ENCODE measurements at regions of chr3 and their contacts with region 1.

Region 1: GRCh38 chr3:102235679-102236078 is 199.1 kb upstream of the ZPLD1 start:
- DNase-seq: no peak
- ATAC-seq: no peak
- H3K4me3 ChIP-seq: no peak overlapping the region
- H3K27ac ChIP-seq: no peak overlapping the region
- H3K4me1 ChIP-seq: peaks cover 0 to 6% of the 10 kb centered on the region in 2 experiments; a peak in 1 of 4 replicates
- H3K27me3 ChIP-seq: no peaks in the 10 kb centered on the region
- CTCF ChIP-seq: peak; percentile 36 to 70 (median 51); a peak in 5 of 6 replicates
- POLR2A ChIP-seq: no peak
- RAD21 ChIP-seq: peak; percentile 85

Region 2: DNA sequence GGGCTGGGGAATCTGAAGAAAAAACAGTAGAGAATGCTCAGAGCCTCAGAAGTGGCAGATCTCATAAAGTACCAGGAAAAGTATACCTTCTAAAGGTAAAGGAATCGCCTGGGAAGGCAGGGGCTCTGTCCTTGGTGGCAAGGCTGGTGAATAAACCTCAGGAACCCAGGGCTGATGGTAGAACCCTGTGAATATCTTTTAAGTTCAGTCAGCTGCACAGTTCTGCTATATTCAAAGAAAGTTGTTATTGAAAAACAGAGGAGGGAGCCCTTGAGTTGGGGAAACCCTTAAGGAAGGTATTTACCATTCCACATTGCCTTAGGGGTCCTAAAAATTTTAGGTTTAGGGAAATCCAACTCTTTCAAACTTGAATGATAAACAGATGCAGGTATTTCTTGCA is 230.3 kb after region 1 on chr3:
- CTCF ChIA-PET with region 1: no interaction called
- POLR2A ChIA-PET with region 1: no interaction called
- RAD21 ChIA-PET with region 1: no interaction called
- intact Hi-C with region 1: loop called (anchors 10 kb)
- DNase-seq: peak; percentile 6
- ATAC-seq: peak; percentile 68
- H3K4me3 ChIP-seq: no peak overlapping the region
- H3K27ac ChIP-seq: no peak overlapping the region
- H3K4me1 ChIP-seq: peaks cover 0 to 3% of the 10 kb centered on the region in 2 experiments; a peak in 2 of 4 replicates
- H3K27me3 ChIP-seq: no peaks in the 10 kb centered on the region
- CTCF ChIP-seq: peak; percentile 21 to 44 (median 38); a peak in 3 of 6 replicates
- POLR2A ChIP-seq: no peak
- RAD21 ChIP-seq: peak; percentile 58; the same call in 1 of the 2 replicates

Region 3: GRCh38 chr3:102529452-102529851 is 293.8 kb after region 1 on chr3:
- CTCF ChIA-PET with region 1: interaction called, 63 read pairs
- POLR2A ChIA-PET with region 1: no interaction called
- RAD21 ChIA-PET with region 1: no interaction called
- intact Hi-C with region 1: no loop called
- DNase-seq: peak; percentile 39
- ATAC-seq: peak; percentile 81
- H3K4me3 ChIP-seq: no peak overlapping the region
- H3K27ac ChIP-seq: no peak overlapping the region
- H3K4me1 ChIP-seq: no peaks in the 10 kb centered on the region
- H3K27me3 ChIP-seq: no peaks in the 10 kb centered on the region
- CTCF ChIP-seq: peak; percentile 51 to 61 (median 59); a peak in 5 of 6 replicates
- POLR2A ChIP-seq: no peak
- RAD21 ChIP-seq: peak; percentile 83

Region 4: GRCh38 chr3:102536456-102536855 is 300.8 kb after region 1 on chr3:
- CTCF ChIA-PET with region 1: interaction called, 60 read pairs
- POLR2A ChIA-PET with region 1: interaction called, 3 read pairs
- RAD21 ChIA-PET with region 1: interaction called, 4 to 7 read pairs
- intact Hi-C with region 1: no loop called
- DNase-seq: peak; percentile 26
- ATAC-seq: peak; percentile 84
- H3K4me3 ChIP-seq: no peak overlapping the region
- H3K27ac ChIP-seq: no peak overlapping the region
- H3K4me1 ChIP-seq: no peaks in the 10 kb centered on the region
- H3K27me3 ChIP-seq: no peaks in the 10 kb centered on the region
- CTCF ChIP-seq: peak; percentile 34 to 63 (median 58); a peak in 5 of 6 replicates
- POLR2A ChIP-seq: no peak
- RAD21 ChIP-seq: peak; percentile 76